Heart left ventricle (tissue), 16 donors: ENCODE measurements at regions of chr2 and their contacts with region 1.

Region 1: GRCh38 chr2:189261431-189261841 is 81.9 kb upstream of the COL5A2 start:
- DNase-seq: no peak
- ATAC-seq: peak in 1 of 4 donors; percentile 10
- H3K4me3 ChIP-seq: no peak overlapping the region
- H3K27ac ChIP-seq: no peak overlapping the region
- H3K4me1 ChIP-seq: peaks cover 0 to 12% (median 0%) of the 10 kb centered on the region in 12 donors
- H3K27me3 ChIP-seq: no peaks in the 10 kb centered on the region
- CTCF ChIP-seq: no peak
- POLR2A ChIP-seq: no peak

Region 2: GRCh38 chr2:189086710-189087109 is 174.7 kb before region 1 on chr2:
- intact Hi-C with region 1: no loop called
- DNase-seq: no peak
- ATAC-seq: peak in 1 of 4 donors; percentile 62
- H3K4me3 ChIP-seq: no peak overlapping the region
- H3K27ac ChIP-seq: no peak overlapping the region
- H3K4me1 ChIP-seq: peaks cover 0 to 3% (median 0%) of the 10 kb centered on the region in 12 donors
- H3K27me3 ChIP-seq: no peaks in the 10 kb centered on the region
- CTCF ChIP-seq: no peak
- POLR2A ChIP-seq: no peak

Region 3: GRCh38 chr2:189204322-189204941 is 57.0 kb before region 1 on chr2:
- intact Hi-C with region 1: loop called in 1 of 10 experiments (anchors 10 kb)
- DNase-seq: no peak
- ATAC-seq: no peak
- H3K4me3 ChIP-seq: no peak overlapping the region
- H3K27ac ChIP-seq: no peak overlapping the region
- H3K4me1 ChIP-seq: peaks cover 0 to under 1% (median 0%) of the 10 kb centered on the region in 12 donors
- H3K27me3 ChIP-seq: no peaks in the 10 kb centered on the region
- CTCF ChIP-seq: no peak
- POLR2A ChIP-seq: no peak

Region 4: DNA sequence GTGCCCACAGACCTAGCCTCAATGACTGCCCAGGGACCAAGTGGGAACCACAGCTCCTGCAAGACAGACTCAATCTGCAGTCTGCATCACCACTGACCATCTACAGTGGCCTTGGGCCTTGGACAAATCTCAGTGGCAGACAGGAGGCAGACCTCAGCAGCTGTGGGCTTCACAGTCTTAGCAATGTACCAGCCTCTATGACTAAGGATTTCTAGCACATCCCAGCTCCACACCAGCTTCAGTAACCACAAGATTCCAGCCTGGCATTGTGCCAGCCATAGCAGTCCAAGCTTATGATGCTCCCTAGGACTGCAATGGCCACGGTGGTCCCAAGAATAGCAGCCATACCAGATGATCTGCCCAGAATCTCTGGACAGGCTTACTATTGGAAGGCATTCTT is 160.2 kb after region 1 on chr2:
- intact Hi-C with region 1: no loop called
- DNase-seq: no peak
- ATAC-seq: no peak
- H3K4me3 ChIP-seq: no peak overlapping the region
- H3K27ac ChIP-seq: no peak overlapping the region
- H3K4me1 ChIP-seq: no peaks in the 10 kb centered on the region
- H3K27me3 ChIP-seq: no peaks in the 10 kb centered on the region
- CTCF ChIP-seq: no peak
- POLR2A ChIP-seq: no peak